Mammary epithelial cell (primary cell): ENCODE measurements at regions of chr9 and their contacts with region 1.

Region 1: GRCh38 chr9:81125446-81126092 is 563.8 kb downstream of the TLE1 start:
- DNase-seq: peak; percentile 91
- H3K4me3 ChIP-seq: no peak overlapping the region
- H3K27ac ChIP-seq: peak overlapping the region; percentile 66
- H3K4me1 ChIP-seq: peaks cover 15% of the 10 kb centered on the region
- H3K27me3 ChIP-seq: no peaks in the 10 kb centered on the region
- CTCF ChIP-seq: no peak

Region 2: DNA sequence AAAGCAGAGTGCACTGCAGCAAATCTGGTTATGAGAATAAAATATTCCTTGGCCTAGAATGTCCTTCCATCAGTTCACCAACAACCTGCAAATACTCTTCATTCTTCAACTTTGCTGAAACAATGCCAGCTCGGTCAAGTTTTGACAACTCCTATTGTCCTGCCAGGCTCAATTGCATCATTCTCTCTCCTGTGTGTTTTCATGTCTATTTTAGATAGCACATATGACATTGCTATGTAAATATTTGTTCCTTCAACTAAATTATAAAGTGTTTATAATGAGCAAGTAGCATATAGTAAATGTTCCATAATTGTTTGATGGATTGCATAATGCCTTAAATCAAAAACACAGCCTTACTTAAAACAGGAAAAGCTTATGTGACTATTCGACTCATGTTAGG is 100.1 kb after region 1 on chr9:
- CTCF ChIA-PET with region 1: no interaction called
- dilution Hi-C with region 1: no loop called
- in situ Hi-C with region 1: loop called in 1 of 2 experiments (anchors 25 kb)
- intact Hi-C with region 1: no loop called
- DNase-seq: peak; percentile 15
- H3K4me3 ChIP-seq: no peak overlapping the region
- H3K27ac ChIP-seq: no peak overlapping the region
- H3K4me1 ChIP-seq: no peaks in the 10 kb centered on the region
- H3K27me3 ChIP-seq: no peaks in the 10 kb centered on the region
- CTCF ChIP-seq: no peak

Region 3: GRCh38 chr9:81389569-81389993 is 264.0 kb after region 1 on chr9:
- CTCF ChIA-PET with region 1: no interaction called
- dilution Hi-C with region 1: no loop called
- in situ Hi-C with region 1: loop called in 1 of 2 experiments (anchors 25 kb)
- intact Hi-C with region 1: no loop called
- DNase-seq: peak; percentile 89
- H3K4me3 ChIP-seq: no peak overlapping the region
- H3K27ac ChIP-seq: peak overlapping the region; percentile 39
- H3K4me1 ChIP-seq: peaks cover 34% of the 10 kb centered on the region
- H3K27me3 ChIP-seq: no peaks in the 10 kb centered on the region
- CTCF ChIP-seq: no peak